Caco-2 (cell line): ENCODE measurements at regions of chr6 and their contacts with region 1.

Region 1: GRCh38 chr6:31952140-31952805 is 6.4 kb downstream of the CFB start:
- DNase-seq: peak; percentile 65 to 80
- H3K4me3 ChIP-seq: no peak overlapping the region
- H3K4me3 Mint-ChIP-seq: no peak overlapping the region
- H3K27ac Mint-ChIP-seq: no peak overlapping the region
- H3K4me1 ChIP-seq: peaks cover 7% of the 10 kb centered on the region
- H3K4me1 Mint-ChIP-seq: peaks cover 24% of the 10 kb centered on the region
- H3K27me3 ChIP-seq: no peaks in the 10 kb centered on the region
- H3K27me3 Mint-ChIP-seq: no peaks in the 10 kb centered on the region
- CTCF ChIP-seq: peak; percentile 70 to 91

Region 2: GRCh38 chr6:31597006-31597405 is 355.3 kb before region 1 on chr6:
- CTCF ChIA-PET with region 1: no interaction called
- POLR2A ChIA-PET with region 1: no interaction called
- intact Hi-C with region 1: no loop called
- DNase-seq: peak in 1 of 2 experiments; percentile 52
- H3K4me3 ChIP-seq: no peak overlapping the region
- H3K4me3 Mint-ChIP-seq: no peak overlapping the region
- H3K27ac Mint-ChIP-seq: no peak overlapping the region
- H3K4me1 ChIP-seq: no peaks in the 10 kb centered on the region
- H3K4me1 Mint-ChIP-seq: peaks cover 5% of the 10 kb centered on the region
- H3K27me3 ChIP-seq: no peaks in the 10 kb centered on the region
- H3K27me3 Mint-ChIP-seq: no peaks in the 10 kb centered on the region
- CTCF ChIP-seq: peak; percentile 34 to 38

Region 3: DNA sequence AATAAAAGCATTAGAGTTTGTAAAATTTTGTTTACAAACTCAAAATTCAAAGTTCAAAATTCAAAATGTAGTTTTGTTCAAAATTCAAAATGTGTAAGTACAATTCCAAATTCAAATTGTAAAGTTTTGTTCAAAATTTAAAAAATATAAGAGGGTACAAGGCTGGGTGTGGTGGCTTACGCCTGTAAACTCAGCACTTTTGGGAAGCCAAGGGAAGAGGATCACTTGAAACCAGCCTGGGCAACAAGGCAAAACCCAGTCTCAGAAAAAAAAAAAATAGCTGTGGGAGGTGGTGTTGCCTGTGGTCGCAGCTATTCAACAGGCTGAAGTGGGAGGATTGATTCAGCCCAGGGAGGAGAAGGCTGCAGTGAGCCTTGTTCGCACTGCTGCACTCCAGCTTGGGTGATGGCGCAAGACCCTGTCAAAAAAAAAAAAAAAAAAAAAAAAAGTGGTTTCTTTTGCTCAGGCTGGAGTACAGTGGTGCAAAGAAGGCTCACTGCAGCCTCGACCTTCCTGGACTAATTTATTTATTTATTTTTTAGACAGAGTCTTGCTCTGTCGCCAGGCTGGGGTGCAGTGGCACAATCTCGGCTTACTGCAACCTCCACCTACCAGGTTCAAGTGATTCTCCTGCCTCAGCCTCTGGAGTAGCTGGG is 45.0 kb before region 1 on chr6:
- CTCF ChIA-PET with region 1: interaction called, 11 read pairs
- POLR2A ChIA-PET with region 1: no interaction called
- intact Hi-C with region 1: loop called (anchors 1 kb)
- DNase-seq: peak in 1 of 2 experiments; percentile 55
- H3K4me3 ChIP-seq: no peak overlapping the region
- H3K4me3 Mint-ChIP-seq: no peak overlapping the region
- H3K27ac Mint-ChIP-seq: no peak overlapping the region
- H3K4me1 ChIP-seq: peaks cover 13% of the 10 kb centered on the region; the same call in 1 of the 2 replicates
- H3K4me1 Mint-ChIP-seq: peaks cover 10% of the 10 kb centered on the region
- H3K27me3 ChIP-seq: no peaks in the 10 kb centered on the region
- H3K27me3 Mint-ChIP-seq: no peaks in the 10 kb centered on the region
- CTCF ChIP-seq: no peak

Region 4: DNA sequence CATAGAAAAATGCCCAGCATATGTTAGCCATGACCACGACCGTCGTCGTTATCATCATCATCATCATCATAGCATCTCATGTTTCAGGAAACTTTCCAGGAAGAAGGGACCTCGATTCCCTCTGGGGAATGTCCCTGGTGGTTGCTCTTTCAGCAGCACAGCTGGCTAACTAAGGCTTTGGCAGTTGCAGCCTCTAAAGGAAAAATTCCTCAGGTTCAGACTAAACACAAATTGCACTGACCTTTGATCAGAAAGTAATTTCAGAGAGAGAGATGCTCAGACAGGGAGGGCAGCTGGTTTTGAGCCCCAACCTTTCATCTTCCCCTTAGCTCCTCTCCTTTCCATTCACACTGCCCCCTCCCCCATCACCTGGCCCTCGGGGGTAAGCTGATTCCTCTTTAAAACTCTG is 12.0 kb before region 1 on chr6:
- CTCF ChIA-PET with region 1: interaction called, 9 read pairs
- POLR2A ChIA-PET with region 1: no interaction called
- intact Hi-C with region 1: loop called (anchors 1 kb)
- DNase-seq: peak; percentile 66 to 73
- H3K4me3 ChIP-seq: no peak overlapping the region
- H3K4me3 Mint-ChIP-seq: peak overlapping the region; percentile 42
- H3K27ac Mint-ChIP-seq: peak overlapping the region; percentile 89
- H3K4me1 ChIP-seq: peaks cover 28% of the 10 kb centered on the region
- H3K4me1 Mint-ChIP-seq: peaks cover 26% of the 10 kb centered on the region
- H3K27me3 ChIP-seq: no peaks in the 10 kb centered on the region
- H3K27me3 Mint-ChIP-seq: no peaks in the 10 kb centered on the region
- CTCF ChIP-seq: peak; percentile 8

Region 5: GRCh38 chr6:32046450-32047083 is 94.3 kb after region 1 on chr6:
- CTCF ChIA-PET with region 1: no interaction called
- POLR2A ChIA-PET with region 1: no interaction called
- intact Hi-C with region 1: no loop called
- DNase-seq: no peak
- H3K4me3 ChIP-seq: no peak overlapping the region
- H3K4me3 Mint-ChIP-seq: no peak overlapping the region
- H3K27ac Mint-ChIP-seq: no peak overlapping the region
- H3K4me1 ChIP-seq: peaks cover 7% of the 10 kb centered on the region
- H3K4me1 Mint-ChIP-seq: no peaks in the 10 kb centered on the region
- H3K27me3 ChIP-seq: no peaks in the 10 kb centered on the region
- H3K27me3 Mint-ChIP-seq: no peaks in the 10 kb centered on the region
- CTCF ChIP-seq: no peak